ENCODE measurements at regions of chr20 and their contacts with region 1.

Region 1: DNA sequence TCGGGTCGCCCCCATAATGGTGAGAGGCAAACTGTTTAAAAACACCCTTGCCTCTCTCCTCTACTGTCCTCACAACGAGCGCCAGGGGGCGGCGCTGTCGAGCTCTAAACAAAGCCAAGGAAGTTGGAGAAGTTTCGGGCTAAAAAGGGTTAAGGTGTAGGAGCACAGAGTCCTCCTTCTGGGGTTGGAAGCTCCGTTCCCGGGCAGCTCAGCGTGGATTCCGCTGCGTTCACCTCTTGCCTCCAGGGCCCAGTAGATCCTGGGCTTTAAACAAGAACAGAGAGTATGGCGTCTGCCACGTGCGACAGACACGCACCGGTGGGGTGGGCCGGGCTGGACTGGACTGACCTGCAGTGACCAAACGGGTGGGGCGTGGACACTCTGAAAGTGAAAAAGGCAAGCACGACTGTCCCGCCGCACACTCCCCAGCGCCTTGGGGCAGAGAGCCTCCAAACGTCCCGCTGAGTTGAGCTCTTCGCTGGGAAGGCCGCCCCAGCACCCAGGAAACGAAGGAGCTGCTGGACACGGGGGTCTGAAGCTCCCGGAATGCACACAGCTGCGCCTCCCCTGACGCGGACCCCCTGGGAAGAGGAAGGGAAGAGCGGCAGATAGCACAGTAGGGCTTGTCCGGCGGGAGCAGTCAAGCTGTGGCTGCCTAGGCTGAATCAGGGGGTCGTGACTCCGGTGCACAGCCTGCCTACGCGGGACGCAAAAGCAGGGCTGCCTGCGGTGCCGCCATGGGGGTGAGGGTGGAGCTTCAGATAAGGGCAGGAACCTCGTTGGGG is 1.6 kb upstream of the THBD start:
- DNase-seq: peak; percentile 26
- H3K4me3 Mint-ChIP-seq: no peak overlapping the region
- H3K27ac Mint-ChIP-seq: no peak overlapping the region
- H3K4me1 Mint-ChIP-seq: no peaks in the 10 kb centered on the region
- H3K27me3 Mint-ChIP-seq: peaks cover 56% of the 10 kb centered on the region

Region 2: GRCh38 chr20:23235173-23236027 is 184.4 kb after region 1 on chr20:
- intact Hi-C with region 1: loop called (anchors 1 kb)
- DNase-seq: peak; percentile 22
- H3K4me3 Mint-ChIP-seq: no peak overlapping the region
- H3K27ac Mint-ChIP-seq: no peak overlapping the region
- H3K4me1 Mint-ChIP-seq: no peaks in the 10 kb centered on the region
- H3K27me3 Mint-ChIP-seq: peaks cover 4% of the 10 kb centered on the region